Activated B cell treated with CpG ODN at 0.5 μM for 24 hours (primary cell): ENCODE measurements at regions of chrX and their contacts with region 1.

Region 1: DNA sequence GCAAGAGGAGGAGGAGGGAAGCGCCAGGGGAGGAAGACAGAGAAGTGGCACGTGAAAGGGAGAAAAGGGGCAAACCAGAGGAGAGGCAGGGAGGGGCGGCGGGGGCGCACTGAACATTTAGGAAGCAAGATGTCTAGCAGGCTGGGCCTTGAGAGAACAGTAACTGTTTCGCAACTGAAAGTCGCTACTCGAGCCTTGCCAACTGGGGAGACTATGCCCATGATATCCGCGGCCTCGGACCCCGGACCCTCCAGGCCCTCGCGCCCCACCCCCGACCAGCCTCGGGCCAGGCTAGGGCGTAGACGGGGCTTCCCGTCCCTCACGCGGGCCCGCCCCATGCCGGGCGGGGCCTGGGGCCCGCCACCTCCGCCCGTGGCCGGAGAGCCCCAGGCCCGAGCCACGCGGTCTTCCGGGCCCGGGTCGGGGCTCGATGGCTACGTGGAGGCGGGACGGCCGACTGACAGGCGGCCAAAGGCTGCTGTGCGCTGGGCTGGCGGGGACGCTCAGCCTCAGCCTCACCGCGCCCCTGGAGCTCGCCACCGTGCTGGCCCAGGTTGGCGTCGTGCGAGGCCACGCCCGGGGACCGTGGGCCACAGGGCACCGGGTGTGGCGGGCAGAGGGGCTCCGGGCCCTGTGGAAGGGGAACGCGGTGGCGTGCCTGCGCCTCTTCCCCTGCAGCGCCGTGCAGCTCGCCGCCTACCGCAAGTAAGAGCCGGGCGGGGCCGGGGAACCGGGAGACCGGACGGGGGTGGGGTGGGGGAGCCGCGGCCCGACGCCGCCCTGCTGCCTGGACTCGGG is at the start of gene SLC25A43:
- DNase-seq: peak; percentile 49
- ATAC-seq: peak; percentile 93
- H3K4me3 Mint-ChIP-seq: peak within 1 kb of the TSS; percentile 93
- H3K27ac Mint-ChIP-seq: peak within 1 kb of the TSS; percentile 92
- H3K4me1 Mint-ChIP-seq: peaks cover 32% of the 10 kb centered on the region
- H3K27me3 Mint-ChIP-seq: no peaks in the 10 kb centered on the region
- CTCF ChIP-seq: no peak
- total RNA-seq, gene SLC25A43: 11.0 and 11.9 TPM in 2 replicates

Region 2: DNA sequence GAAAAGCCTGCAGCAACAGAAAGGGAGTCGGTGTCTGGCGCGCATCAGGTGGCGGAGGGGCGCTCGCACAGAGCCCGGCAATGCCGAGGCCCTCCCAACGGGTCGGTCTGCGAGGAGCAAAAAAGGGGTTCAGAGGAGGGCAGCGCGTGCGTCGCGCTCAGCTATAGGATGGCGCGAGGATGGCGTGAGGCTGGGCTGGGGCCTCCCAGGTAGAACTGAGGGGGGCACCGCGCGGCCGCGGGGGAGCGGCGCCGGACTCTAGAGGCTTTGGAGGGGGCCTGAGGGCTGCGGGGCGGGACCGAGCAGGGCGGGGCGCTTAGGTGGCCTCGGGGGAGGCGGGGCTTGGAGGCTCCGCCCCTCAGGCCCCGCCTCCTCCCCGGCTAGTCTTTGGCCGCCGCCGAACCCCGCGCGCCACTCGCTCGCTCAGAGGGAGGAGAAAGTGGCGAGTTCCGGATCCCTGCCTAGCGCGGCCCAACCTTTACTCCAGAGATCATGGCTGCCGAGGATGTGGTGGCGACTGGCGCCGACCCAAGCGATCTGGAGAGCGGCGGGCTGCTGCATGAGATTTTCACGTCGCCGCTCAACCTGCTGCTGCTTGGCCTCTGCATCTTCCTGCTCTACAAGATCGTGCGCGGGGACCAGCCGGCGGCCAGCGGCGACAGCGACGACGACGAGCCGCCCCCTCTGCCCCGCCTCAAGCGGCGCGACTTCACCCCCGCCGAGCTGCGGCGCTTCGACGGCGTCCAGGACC is 163.1 kb before region 1 on chrX and contains the start of gene PGRMC1:
- CTCF ChIA-PET with region 1: no interaction called
- POLR2A ChIA-PET with region 1: no interaction called
- intact Hi-C with region 1: loop called (anchors 10 kb)
- DNase-seq: peak; percentile 64
- ATAC-seq: peak; percentile 97
- H3K4me3 Mint-ChIP-seq: peak within 1 kb of the TSS; percentile 89
- H3K27ac Mint-ChIP-seq: peak within 1 kb of the TSS; percentile 82
- H3K4me1 Mint-ChIP-seq: peaks cover 16% of the 10 kb centered on the region
- H3K27me3 Mint-ChIP-seq: no peaks in the 10 kb centered on the region
- CTCF ChIP-seq: no peak
- total RNA-seq, gene PGRMC1: 8.5 and 9.8 TPM in 2 replicates

Region 3: DNA sequence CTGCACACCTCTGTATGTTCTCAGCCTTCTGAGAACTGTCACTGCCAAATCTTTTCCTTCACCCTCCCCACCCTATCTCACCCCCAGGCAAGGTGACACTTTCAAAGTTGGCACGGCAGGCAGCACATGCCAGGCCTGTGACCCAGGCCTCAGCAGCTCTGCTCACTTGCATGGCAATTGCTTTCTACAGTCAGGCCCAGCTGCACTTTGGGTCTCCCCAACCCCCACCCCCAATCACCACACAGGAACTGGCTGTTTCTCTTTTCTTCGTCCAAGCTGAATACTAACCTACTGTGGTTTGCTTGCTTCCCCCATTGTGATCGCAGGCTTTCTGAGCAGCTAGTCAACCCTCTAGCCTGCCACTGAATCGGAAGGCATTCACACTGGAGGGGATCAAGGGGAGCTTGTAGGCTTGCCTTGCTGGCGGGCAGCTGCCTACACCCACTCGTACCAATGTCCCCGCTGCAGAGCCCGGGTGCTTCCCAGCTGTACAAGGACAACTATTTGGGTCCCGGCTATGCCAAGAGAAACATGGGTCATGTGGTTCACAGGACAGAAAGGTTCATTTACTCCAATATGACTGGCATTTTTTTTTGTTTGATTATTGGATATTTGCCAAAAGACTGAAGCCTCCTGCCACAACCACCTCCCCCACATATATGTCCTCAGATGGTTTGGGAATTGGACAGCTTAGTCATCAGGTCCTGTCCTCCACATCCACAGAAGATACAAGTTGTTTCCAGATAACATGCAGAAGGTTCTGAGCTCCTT is 28.0 kb after region 1 on chrX:
- CTCF ChIA-PET with region 1: no interaction called
- POLR2A ChIA-PET with region 1: interaction called, 3 read pairs
- intact Hi-C with region 1: loop called (anchors 1 kb)
- DNase-seq: peak; percentile 15
- ATAC-seq: peak; percentile 93
- H3K4me3 Mint-ChIP-seq: peak overlapping the region; percentile 64
- H3K27ac Mint-ChIP-seq: peak overlapping the region; percentile 92
- H3K4me1 Mint-ChIP-seq: peaks cover 31% of the 10 kb centered on the region
- H3K27me3 Mint-ChIP-seq: no peaks in the 10 kb centered on the region
- CTCF ChIP-seq: no peak